Ascending aorta (tissue), 2 donors: ENCODE measurements at regions of chr11 and their contacts with region 1.

Region 1: GRCh38 chr11:83071567-83072349 is at the start of gene RAB30:
- DNase-seq: peak; percentile 98 to 99
- H3K4me3 ChIP-seq: peak within 1 kb of the TSS; percentile 71 to 74
- H3K27ac ChIP-seq: peak within 1 kb of the TSS; percentile 94 to 95
- H3K4me1 ChIP-seq: peaks cover 11 to 21% of the 10 kb centered on the region in 2 donors
- H3K27me3 ChIP-seq: no peaks in the 10 kb centered on the region
- CTCF ChIP-seq: no peak
- total RNA-seq, gene RAB30: 7.7 TPM

Region 2: GRCh38 chr11:82900277-82901164 is 171.2 kb before region 1 on chr11 and contains the start of gene PRCP:
- intact Hi-C with region 1: loop called (anchors 2 kb)
- DNase-seq: peak; percentile 86 to 97
- H3K4me3 ChIP-seq: peak within 1 kb of the TSS; percentile 70 to 80
- H3K27ac ChIP-seq: peak within 1 kb of the TSS; percentile 84 to 92
- H3K4me1 ChIP-seq: peaks cover 0 to 3% of the 10 kb centered on the region in 2 donors
- H3K27me3 ChIP-seq: no peaks in the 10 kb centered on the region
- CTCF ChIP-seq: no peak
- total RNA-seq, gene PRCP: 151 TPM

Region 3: GRCh38 chr11:83033972-83034672 is 37.6 kb before region 1 on chr11:
- intact Hi-C with region 1: loop called (anchors 1 kb)
- DNase-seq: peak in 1 of 2 donors; percentile 72
- H3K4me3 ChIP-seq: peak overlapping the region; percentile 32 to 41
- H3K27ac ChIP-seq: peak overlapping the region; percentile 80 to 83
- H3K4me1 ChIP-seq: peaks cover 4 to 13% of the 10 kb centered on the region in 2 donors
- H3K27me3 ChIP-seq: no peaks in the 10 kb centered on the region
- CTCF ChIP-seq: no peak

Region 4: GRCh38 chr11:83156150-83156995 is 84.6 kb after region 1 on chr11:
- intact Hi-C with region 1: loop called (anchors 1 kb)
- DNase-seq: peak; percentile 99 to 100
- H3K4me3 ChIP-seq: peak overlapping the region; percentile 70 to 95
- H3K27ac ChIP-seq: peak overlapping the region; percentile 89 to 94
- H3K4me1 ChIP-seq: peaks cover 5 to 6% of the 10 kb centered on the region in 2 donors
- H3K27me3 ChIP-seq: no peaks in the 10 kb centered on the region
- CTCF ChIP-seq: no peak

Region 5: GRCh38 chr11:83285771-83286528 is 214.2 kb after region 1 on chr11 and contains the start of gene CCDC90B:
- intact Hi-C with region 1: loop called (anchors 5 kb)
- DNase-seq: peak; percentile 89 to 98
- H3K4me3 ChIP-seq: peak within 1 kb of the TSS; percentile 86 to 87
- H3K27ac ChIP-seq: peak within 1 kb of the TSS; percentile 94 to 98
- H3K4me1 ChIP-seq: peaks cover 0 to 20% of the 10 kb centered on the region in 2 donors
- H3K27me3 ChIP-seq: no peaks in the 10 kb centered on the region
- CTCF ChIP-seq: peak in 1 of 3 experiments; percentile 22
- total RNA-seq, gene CCDC90B: 8.2 TPM